PC-9 (cell line): ENCODE measurements at regions of chrX and their contacts with region 1.

Region 1: DNA sequence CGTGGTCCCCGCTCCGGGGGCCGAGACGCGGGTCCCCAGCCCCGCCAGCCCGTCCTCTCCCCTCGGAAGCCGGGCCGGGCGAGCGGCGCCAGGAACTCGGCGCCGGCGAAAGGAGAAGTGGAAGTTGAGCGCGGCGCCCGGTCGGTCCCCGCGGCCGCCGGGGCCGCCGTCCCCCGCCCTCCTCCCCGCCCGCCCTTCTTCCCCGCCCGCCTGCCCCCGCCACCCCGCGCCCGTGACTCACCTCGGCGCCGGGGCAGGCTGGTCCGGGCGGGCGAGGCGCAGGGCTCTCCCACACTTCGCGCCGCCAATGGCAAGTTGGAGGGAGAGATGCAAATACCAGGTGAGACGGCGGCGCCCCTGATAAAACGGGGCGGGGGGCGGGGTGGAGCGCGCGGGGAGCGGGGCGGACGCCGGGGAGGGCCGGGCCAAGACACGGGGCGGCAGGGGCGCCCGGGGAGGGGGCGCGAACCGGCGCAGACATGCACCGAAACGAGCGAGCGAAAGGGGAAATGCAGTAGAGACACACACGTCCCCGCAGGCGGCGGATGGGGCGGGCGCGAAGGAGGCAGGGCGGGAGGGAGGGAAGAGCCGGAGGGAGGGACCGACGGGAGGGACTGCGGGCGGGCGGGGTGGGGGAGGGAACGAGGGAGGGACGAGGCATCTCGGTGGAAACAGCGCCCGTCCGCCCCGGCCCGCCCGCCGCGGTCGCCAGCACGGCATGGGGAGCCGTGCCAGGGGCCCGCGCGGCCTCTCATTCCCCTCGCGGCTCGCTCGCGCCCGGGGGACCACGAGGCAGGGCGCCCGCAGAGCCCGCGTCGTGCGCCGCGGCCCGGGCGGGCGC is at the start of gene ELF4:
- DNase-seq: peak; percentile 77 to 86
- H3K4me3 ChIP-seq: peak within 1 kb of the TSS; percentile 94
- H3K27ac ChIP-seq: peak within 1 kb of the TSS; percentile 92
- H3K4me1 ChIP-seq: peaks cover 76% of the 10 kb centered on the region
- H3K27me3 ChIP-seq: no peaks in the 10 kb centered on the region
- CTCF ChIP-seq: no peak
- total RNA-seq, gene ELF4: 53.0 and 60.3 TPM in 2 replicates

Region 2: DNA sequence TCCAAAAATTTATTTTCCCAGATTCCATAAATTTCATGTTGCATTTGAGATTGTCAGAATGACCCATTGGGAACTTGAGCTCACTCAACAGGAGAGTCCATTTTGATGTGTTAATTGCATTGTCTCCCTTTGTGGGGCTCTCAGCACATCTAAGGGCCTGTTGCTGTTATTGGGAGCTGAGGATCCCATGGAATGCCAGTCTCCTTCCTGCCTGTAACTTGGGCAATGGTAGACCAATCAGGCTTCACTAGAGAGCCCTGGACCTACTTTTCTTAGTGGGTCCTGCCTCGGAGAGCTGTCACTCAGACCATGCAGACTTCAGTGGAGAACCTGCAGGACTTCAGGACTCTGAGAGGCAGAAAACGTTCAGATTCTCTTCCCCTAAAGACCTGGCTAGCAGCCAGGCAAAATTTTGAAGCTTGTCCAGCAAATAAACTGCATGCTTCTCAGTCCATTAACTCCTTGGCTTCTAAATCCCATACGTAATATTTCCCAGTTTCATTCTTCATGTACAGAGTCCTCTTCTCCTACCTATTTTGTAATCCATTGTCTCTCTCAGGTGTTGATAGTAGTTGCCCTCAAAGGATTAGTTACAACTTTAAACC is 545.5 kb before region 1 on chrX:
- CTCF ChIA-PET with region 1: interaction called, 12 read pairs
- POLR2A ChIA-PET with region 1: no interaction called
- intact Hi-C with region 1: no loop called
- DNase-seq: no peak
- H3K4me3 ChIP-seq: no peak overlapping the region
- H3K27ac ChIP-seq: no peak overlapping the region
- H3K4me1 ChIP-seq: no peaks in the 10 kb centered on the region
- H3K27me3 ChIP-seq: no peaks in the 10 kb centered on the region
- CTCF ChIP-seq: no peak

Region 3: GRCh38 chrX:130086447-130087206 is 24.0 kb before region 1 on chrX:
- CTCF ChIA-PET with region 1: no interaction called
- POLR2A ChIA-PET with region 1: no interaction called
- intact Hi-C with region 1: no loop called
- DNase-seq: no peak
- H3K4me3 ChIP-seq: no peak overlapping the region
- H3K27ac ChIP-seq: no peak overlapping the region
- H3K4me1 ChIP-seq: peaks cover 10% of the 10 kb centered on the region
- H3K27me3 ChIP-seq: no peaks in the 10 kb centered on the region
- CTCF ChIP-seq: no peak

Region 4: GRCh38 chrX:130120746-130121504 is 10.3 kb after region 1 on chrX:
- CTCF ChIA-PET with region 1: interaction called, 3 read pairs
- POLR2A ChIA-PET with region 1: interaction called, 6 read pairs
- intact Hi-C with region 1: loop called (anchors 2 kb)
- DNase-seq: peak; percentile 71 to 79
- H3K4me3 ChIP-seq: peak overlapping the region; percentile 51; the same call in 1 of the 2 replicates
- H3K27ac ChIP-seq: peak overlapping the region; percentile 66
- H3K4me1 ChIP-seq: peaks cover 75% of the 10 kb centered on the region
- H3K27me3 ChIP-seq: no peaks in the 10 kb centered on the region
- CTCF ChIP-seq: peak; percentile 75

Region 5: DNA sequence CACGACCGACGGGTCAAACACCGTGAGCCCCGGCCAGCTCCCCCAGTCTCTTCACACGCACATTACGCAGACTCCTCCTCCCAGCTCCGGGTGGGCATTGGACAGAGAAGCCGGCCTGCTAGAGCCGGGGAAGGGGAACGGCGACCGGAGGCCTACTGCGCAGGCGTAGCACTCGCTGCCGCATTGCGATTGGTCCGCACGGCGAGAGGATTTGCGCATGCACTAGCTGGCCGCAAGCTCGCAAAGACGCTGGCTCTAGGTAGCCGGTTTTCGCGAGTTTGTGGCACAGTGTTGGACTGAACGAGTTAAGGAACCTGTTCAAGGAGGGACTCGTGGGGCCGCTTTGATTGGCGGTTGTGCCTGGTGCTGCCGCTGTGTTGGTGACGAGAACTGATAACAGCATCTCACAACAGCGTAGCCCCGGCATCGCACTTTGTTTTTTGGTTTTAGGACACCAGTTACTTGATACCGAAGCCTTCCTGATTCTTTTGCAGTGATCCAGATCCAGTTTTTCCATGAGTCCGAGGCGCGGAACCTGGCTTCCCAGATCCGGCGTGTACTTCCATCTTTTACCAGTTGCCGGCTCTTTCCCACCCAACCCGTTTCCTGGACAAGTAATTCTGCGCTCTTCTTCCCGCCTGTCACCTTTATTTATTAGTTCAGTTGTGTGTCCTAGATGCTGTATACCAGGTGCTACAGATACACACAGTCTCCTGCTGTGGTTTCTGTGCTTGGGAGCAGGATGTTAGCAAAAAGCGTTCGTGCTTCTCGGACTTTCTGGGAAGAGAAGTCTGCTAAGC is 55.3 kb after region 1 on chrX and contains the start of gene AIFM1:
- CTCF ChIA-PET with region 1: no interaction called
- POLR2A ChIA-PET with region 1: no interaction called
- intact Hi-C with region 1: loop called (anchors 5 kb)
- DNase-seq: peak; percentile 90 to 97
- H3K4me3 ChIP-seq: peak within 1 kb of the TSS; percentile 79
- H3K27ac ChIP-seq: peak within 1 kb of the TSS; percentile 84
- H3K4me1 ChIP-seq: peaks cover 19% of the 10 kb centered on the region
- H3K27me3 ChIP-seq: no peaks in the 10 kb centered on the region
- CTCF ChIP-seq: no peak
- total RNA-seq, gene AIFM1: 70.1 and 83.3 TPM in 2 replicates

Region 6: GRCh38 chrX:130174051-130174704 is 63.6 kb after region 1 on chrX:
- CTCF ChIA-PET with region 1: interaction called, 12 read pairs
- POLR2A ChIA-PET with region 1: no interaction called
- intact Hi-C with region 1: loop called (anchors 5 kb)
- DNase-seq: peak; percentile 11 to 48
- H3K4me3 ChIP-seq: peak overlapping the region; percentile 7; the same call in 1 of the 2 replicates
- H3K27ac ChIP-seq: peak overlapping the region; percentile 97
- H3K4me1 ChIP-seq: peaks cover 28% of the 10 kb centered on the region
- H3K27me3 ChIP-seq: no peaks in the 10 kb centered on the region
- CTCF ChIP-seq: no peak

Region 7: GRCh38 chrX:130435937-130436336 is 325.3 kb after region 1 on chrX:
- CTCF ChIA-PET with region 1: no interaction called
- POLR2A ChIA-PET with region 1: no interaction called
- intact Hi-C with region 1: no loop called
- DNase-seq: no peak
- H3K4me3 ChIP-seq: no peak overlapping the region
- H3K27ac ChIP-seq: no peak overlapping the region
- H3K4me1 ChIP-seq: no peaks in the 10 kb centered on the region
- H3K27me3 ChIP-seq: peaks cover 76% of the 10 kb centered on the region
- CTCF ChIP-seq: no peak